Naive thymus-derived CD4-positive, alpha-beta T cell (primary cell): ENCODE measurements at regions of chr10 and their contacts with region 1.

Region 1: DNA sequence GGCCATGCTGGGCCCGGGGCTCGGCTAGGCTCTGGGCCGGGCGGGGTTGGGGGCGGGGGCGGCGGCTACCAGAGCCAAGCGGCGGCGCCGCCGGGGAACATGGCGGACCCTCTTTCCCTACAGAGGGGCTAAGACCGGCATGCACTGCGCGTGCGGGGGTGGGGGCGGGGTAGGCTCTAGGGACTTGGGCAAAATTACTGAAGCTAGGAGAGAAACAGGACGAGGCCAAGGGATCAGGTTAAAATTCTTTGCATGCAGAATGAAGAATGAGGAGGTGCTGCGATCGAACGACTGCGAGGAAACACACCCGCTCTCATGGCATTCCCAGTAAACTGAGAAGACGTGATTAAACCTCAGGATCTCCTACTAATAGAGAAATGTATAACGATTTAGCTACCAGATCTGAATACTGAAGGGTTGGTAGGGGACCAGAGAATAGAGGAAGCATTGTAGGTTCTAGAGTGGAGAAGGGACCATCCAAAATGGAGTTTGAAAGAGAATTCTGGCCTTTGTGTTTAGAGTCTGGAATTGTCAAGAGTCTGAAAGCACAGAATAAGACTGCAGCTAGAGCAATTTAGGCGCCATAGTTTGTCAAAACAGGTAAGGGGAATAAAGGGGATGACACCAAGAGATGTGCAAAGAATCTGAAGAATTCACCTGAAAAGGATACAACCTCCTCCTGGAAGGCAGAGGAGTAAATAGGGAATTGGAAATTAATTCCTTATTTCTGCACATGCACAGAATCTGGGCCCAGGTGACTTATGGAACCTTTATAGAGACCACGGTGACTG is at the start of gene PPP3CB:
- DNase-seq: peak in 6 of 9 donors; percentile 77 to 93 (median 84)
- ATAC-seq: peak; percentile 89
- H3K4me3 ChIP-seq: peak within 1 kb of the TSS; percentile 99
- H3K4me3 Mint-ChIP-seq: peak within 1 kb of the TSS; percentile 84 to 99 (median 90)
- H3K27ac ChIP-seq: peak within 1 kb of the TSS; percentile 91
- H3K27ac Mint-ChIP-seq: peak within 1 kb of the TSS; percentile 83 to 99 (median 93)
- H3K4me1 ChIP-seq: peaks cover 19 to 38% of the 10 kb centered on the region in 2 donors
- H3K4me1 Mint-ChIP-seq: peaks cover 44 to 63% (median 55%) of the 10 kb centered on the region in 7 donors
- H3K27me3 ChIP-seq: no peaks in the 10 kb centered on the region
- H3K27me3 Mint-ChIP-seq: no peaks in the 10 kb centered on the region
- total RNA-seq, gene PPP3CB: 25.7 to 44.5 (median 41.4) TPM

Region 2: DNA sequence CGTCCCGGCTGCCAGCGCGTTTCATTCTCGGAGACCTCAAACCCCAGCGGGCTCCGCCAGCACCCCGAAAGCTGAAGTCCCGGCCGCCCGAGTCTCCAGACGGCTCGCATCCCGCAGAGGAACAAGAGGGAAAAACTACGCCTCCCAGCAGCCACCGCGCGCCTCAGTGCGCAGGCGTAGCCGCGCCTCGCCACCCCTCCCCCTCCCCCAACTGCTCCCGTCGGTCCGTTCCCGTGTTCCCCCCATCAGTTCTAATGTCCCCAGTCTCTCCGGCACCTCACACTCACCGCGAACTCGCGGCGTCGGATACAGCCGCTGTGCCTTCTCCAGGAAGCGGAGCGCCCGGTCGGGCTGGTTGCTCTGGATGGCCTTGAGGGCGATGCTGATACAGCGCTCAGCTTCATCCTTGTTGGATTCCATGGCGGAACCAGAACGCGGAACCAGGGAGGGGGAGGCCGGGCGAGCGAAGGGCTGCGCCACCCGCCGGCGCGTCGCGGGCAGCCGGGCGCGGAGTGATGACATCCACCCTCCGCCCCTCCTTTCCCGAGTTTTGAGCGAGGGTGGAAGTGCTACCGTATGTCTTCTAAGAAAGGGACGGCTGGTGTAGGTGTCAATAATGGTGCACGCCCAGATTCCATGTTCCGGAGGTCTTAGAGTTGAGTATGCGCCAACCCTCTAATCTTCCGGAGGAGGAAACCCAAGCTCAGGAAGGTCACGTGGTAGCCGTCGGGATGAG is 1141.4 kb before region 1 on chr10 and contains the start of gene DNAJB12:
- CTCF ChIA-PET with region 1: no interaction called
- POLR2A ChIA-PET with region 1: no interaction called
- intact Hi-C with region 1: loop called in 1 of 2 experiments (anchors 1 kb)
- DNase-seq: peak; percentile 90 to 96 (median 94)
- ATAC-seq: peak; percentile 94
- H3K4me3 ChIP-seq: peak within 1 kb of the TSS; percentile 98
- H3K4me3 Mint-ChIP-seq: peak within 1 kb of the TSS; percentile 93 to 99 (median 96)
- H3K27ac ChIP-seq: peak within 1 kb of the TSS; percentile 88
- H3K27ac Mint-ChIP-seq: peak within 1 kb of the TSS; percentile 93 to 100 (median 97)
- H3K4me1 ChIP-seq: peaks cover 8 to 13% of the 10 kb centered on the region in 2 donors
- H3K4me1 Mint-ChIP-seq: peaks cover 31 to 59% (median 46%) of the 10 kb centered on the region in 7 donors
- H3K27me3 ChIP-seq: no peaks in the 10 kb centered on the region
- H3K27me3 Mint-ChIP-seq: no peaks in the 10 kb centered on the region
- total RNA-seq, gene DNAJB12: 24.6 to 40.5 (median 36.2) TPM

Region 3: GRCh38 chr10:73252445-73253224 is 243.4 kb before region 1 on chr10 and contains the start of gene MRPS16:
- CTCF ChIA-PET with region 1: no interaction called
- POLR2A ChIA-PET with region 1: interaction called, 8 read pairs
- intact Hi-C with region 1: loop called (anchors 1 kb)
- DNase-seq: peak; percentile 75 to 95 (median 93)
- ATAC-seq: peak; percentile 98
- H3K4me3 ChIP-seq: peak within 1 kb of the TSS; percentile 94
- H3K4me3 Mint-ChIP-seq: peak within 1 kb of the TSS; percentile 95 to 100 (median 99)
- H3K27ac ChIP-seq: peak within 1 kb of the TSS; percentile 92
- H3K27ac Mint-ChIP-seq: peak within 1 kb of the TSS; percentile 91 to 97 (median 94)
- H3K4me1 ChIP-seq: peaks cover 18 to 26% of the 10 kb centered on the region in 2 donors
- H3K4me1 Mint-ChIP-seq: peaks cover 19 to 50% (median 37%) of the 10 kb centered on the region in 7 donors
- H3K27me3 ChIP-seq: no peaks in the 10 kb centered on the region
- H3K27me3 Mint-ChIP-seq: peaks cover 0 to 2% (median 0%) of the 10 kb centered on the region in 5 donors
- total RNA-seq, gene MRPS16: 29.6 to 99.9 (median 47.6) TPM

Region 4: DNA sequence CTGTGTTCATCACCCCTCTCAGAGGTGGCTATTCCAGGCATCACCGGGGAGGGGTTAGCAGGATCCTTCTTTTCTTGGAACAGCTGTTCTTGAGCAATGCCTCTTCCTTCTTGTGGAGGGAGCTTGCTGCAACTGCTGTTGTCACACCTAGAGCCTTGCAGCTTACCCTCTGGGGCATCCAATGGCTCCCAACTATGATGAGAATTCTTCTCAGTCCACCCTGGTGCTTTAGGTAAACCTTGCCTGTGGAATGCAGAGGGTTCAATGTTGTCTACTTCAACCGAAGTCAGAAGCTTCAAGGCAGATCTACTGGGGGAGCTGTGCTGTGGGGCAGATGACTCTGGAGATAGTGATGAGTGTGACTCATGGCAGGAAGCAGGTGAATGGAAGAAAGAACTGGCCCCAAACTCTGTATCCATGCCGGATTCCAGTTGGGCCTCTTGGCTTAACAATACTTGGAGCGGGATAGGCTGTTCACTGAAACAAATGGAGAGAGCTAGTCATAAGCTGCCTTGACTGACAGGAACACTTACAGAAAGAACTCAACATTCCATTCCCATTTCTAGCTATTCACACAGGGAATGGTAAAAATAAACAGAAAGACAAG is 21.3 kb after region 1 on chr10:
- CTCF ChIA-PET with region 1: no interaction called
- POLR2A ChIA-PET with region 1: no interaction called
- intact Hi-C with region 1: loop called in 1 of 2 experiments (anchors 1 kb)
- DNase-seq: no peak
- ATAC-seq: no peak
- H3K4me3 ChIP-seq: no peak overlapping the region
- H3K4me3 Mint-ChIP-seq: no peak overlapping the region
- H3K27ac ChIP-seq: no peak overlapping the region
- H3K27ac Mint-ChIP-seq: peak overlapping the region in 2 of 9 donors; percentile 38 to 55
- H3K4me1 ChIP-seq: no peaks in the 10 kb centered on the region
- H3K4me1 Mint-ChIP-seq: no peaks in the 10 kb centered on the region
- H3K27me3 ChIP-seq: no peaks in the 10 kb centered on the region
- H3K27me3 Mint-ChIP-seq: no peaks in the 10 kb centered on the region

Region 5: DNA sequence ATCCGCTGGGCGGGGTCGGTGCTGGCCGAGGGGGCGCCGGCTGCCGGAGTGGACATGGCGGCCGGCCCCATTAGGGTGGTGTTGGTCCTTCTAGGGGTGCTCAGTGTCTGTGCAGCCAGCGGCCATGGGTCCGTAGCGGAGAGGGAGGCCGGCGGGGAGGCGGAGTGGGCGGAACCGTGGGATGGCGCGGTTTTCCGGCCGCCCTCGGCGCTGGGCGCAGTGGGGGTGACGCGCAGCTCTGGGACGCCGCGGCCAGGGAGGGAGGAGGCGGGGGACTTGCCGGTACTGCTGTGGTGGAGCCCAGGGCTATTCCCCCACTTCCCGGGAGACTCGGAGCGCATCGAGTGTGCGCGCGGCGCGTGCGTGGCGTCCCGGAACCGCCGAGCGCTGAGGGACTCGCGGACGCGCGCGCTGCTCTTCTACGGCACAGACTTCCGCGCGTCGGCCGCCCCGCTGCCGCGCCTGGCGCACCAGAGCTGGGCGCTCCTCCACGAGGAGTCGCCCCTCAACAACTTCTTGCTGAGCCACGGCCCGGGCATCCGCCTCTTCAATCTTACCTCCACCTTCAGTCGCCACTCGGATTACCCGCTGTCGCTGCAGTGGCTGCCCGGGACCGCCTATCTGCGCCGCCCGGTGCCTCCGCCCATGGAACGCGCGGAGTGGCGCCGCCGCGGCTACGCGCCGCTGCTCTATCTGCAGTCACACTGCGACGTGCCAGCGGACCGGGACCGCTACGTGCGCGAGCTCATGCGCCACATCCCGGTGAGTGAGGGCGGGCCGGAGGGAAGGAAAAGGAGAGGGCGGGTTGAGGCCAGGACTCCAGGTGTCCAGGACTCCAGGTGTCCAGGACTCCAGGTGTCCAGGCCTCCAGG is 276.4 kb after region 1 on chr10:
- CTCF ChIA-PET with region 1: no interaction called
- POLR2A ChIA-PET with region 1: interaction called, 6 read pairs
- intact Hi-C with region 1: loop called in 1 of 2 experiments (anchors 1 kb)
- DNase-seq: peak; percentile 75 to 90 (median 83)
- ATAC-seq: peak; percentile 80
- H3K4me3 ChIP-seq: peak overlapping the region; percentile 69
- H3K4me3 Mint-ChIP-seq: peak overlapping the region; percentile 87 to 97 (median 95)
- H3K27ac ChIP-seq: peak overlapping the region; percentile 85
- H3K27ac Mint-ChIP-seq: peak overlapping the region; percentile 89 to 97 (median 94)
- H3K4me1 ChIP-seq: peaks cover 27 to 30% of the 10 kb centered on the region in 2 donors
- H3K4me1 Mint-ChIP-seq: peaks cover 34 to 73% (median 64%) of the 10 kb centered on the region in 7 donors
- H3K27me3 ChIP-seq: no peaks in the 10 kb centered on the region
- H3K27me3 Mint-ChIP-seq: no peaks in the 10 kb centered on the region

Region 6: GRCh38 chr10:74151056-74151878 is 655.2 kb after region 1 on chr10 and contains the start of gene ADK:
- CTCF ChIA-PET with region 1: no interaction called
- POLR2A ChIA-PET with region 1: no interaction called
- intact Hi-C with region 1: loop called in 1 of 2 experiments (anchors 1 kb)
- DNase-seq: peak in 8 of 9 donors; percentile 96 to 100 (median 99)
- ATAC-seq: peak; percentile 99
- H3K4me3 ChIP-seq: peak within 1 kb of the TSS; percentile 90
- H3K4me3 Mint-ChIP-seq: no peak within 1 kb of the TSS
- H3K27ac ChIP-seq: peak within 1 kb of the TSS; percentile 84
- H3K27ac Mint-ChIP-seq: peak within 1 kb of the TSS in 5 of 9 donors; percentile 8 to 78 (median 47)
- H3K4me1 ChIP-seq: peaks cover 17 to 23% of the 10 kb centered on the region in 2 donors
- H3K4me1 Mint-ChIP-seq: peaks cover 36 to 56% (median 47%) of the 10 kb centered on the region in 7 donors
- H3K27me3 ChIP-seq: no peaks in the 10 kb centered on the region
- H3K27me3 Mint-ChIP-seq: no peaks in the 10 kb centered on the region
- total RNA-seq, gene ADK: 20.7 to 32.6 (median 25.0) TPM

Region 7: GRCh38 chr10:75235375-75236177 is 1739.5 kb after region 1 on chr10 and contains the start of gene COMTD1:
- CTCF ChIA-PET with region 1: no interaction called
- POLR2A ChIA-PET with region 1: no interaction called
- intact Hi-C with region 1: loop called in 1 of 2 experiments (anchors 5 kb)
- DNase-seq: peak; percentile 82 to 96 (median 91)
- ATAC-seq: peak; percentile 82
- H3K4me3 ChIP-seq: peak within 1 kb of the TSS; percentile 80
- H3K4me3 Mint-ChIP-seq: peak within 1 kb of the TSS; percentile 74 to 88 (median 82)
- H3K27ac ChIP-seq: peak within 1 kb of the TSS; percentile 78
- H3K27ac Mint-ChIP-seq: peak within 1 kb of the TSS; percentile 73 to 97 (median 86)
- H3K4me1 ChIP-seq: peaks cover 4 to 11% of the 10 kb centered on the region in 2 donors
- H3K4me1 Mint-ChIP-seq: peaks cover 10 to 23% (median 16%) of the 10 kb centered on the region in 7 donors
- H3K27me3 ChIP-seq: no peaks in the 10 kb centered on the region
- H3K27me3 Mint-ChIP-seq: no peaks in the 10 kb centered on the region
- total RNA-seq, gene COMTD1: 10.1 to 29.2 (median 15.8) TPM